Activated T-helper 2 cell treated with anti-CD3 and anti-CD28 coated beads, Interferon-gamma antibody, Interleukin-2, Interleukin-4, amounts not matched to agents 10 μg/mL and 5 μg/mL and 100 μg/mL, durations not matched to agents 14 hours and 24 hours and 36 hours (primary cell): ENCODE measurements at regions of chr4 and their contacts with region 1.

Region 1: GRCh38 chr4:107757864-107758476 is 37.9 kb upstream of the PAPSS1 start:
- DNase-seq: no peak
- H3K4me3 Mint-ChIP-seq: no peak overlapping the region
- H3K27ac Mint-ChIP-seq: no peak overlapping the region
- H3K4me1 Mint-ChIP-seq: peaks cover 3% of the 10 kb centered on the region
- H3K27me3 Mint-ChIP-seq: peaks cover 6% of the 10 kb centered on the region

Region 2: GRCh38 chr4:107793996-107794395 is 36.0 kb after region 1 on chr4:
- intact Hi-C with region 1: no loop called
- DNase-seq: no peak
- H3K4me3 Mint-ChIP-seq: no peak overlapping the region
- H3K27ac Mint-ChIP-seq: no peak overlapping the region
- H3K4me1 Mint-ChIP-seq: no peaks in the 10 kb centered on the region
- H3K27me3 Mint-ChIP-seq: peaks cover 5% of the 10 kb centered on the region

Region 3: GRCh38 chr4:107888237-107888636 is 130.3 kb after region 1 on chr4:
- intact Hi-C with region 1: no loop called
- DNase-seq: no peak
- H3K4me3 Mint-ChIP-seq: no peak overlapping the region
- H3K27ac Mint-ChIP-seq: no peak overlapping the region
- H3K4me1 Mint-ChIP-seq: no peaks in the 10 kb centered on the region
- H3K27me3 Mint-ChIP-seq: no peaks in the 10 kb centered on the region

Region 4: DNA sequence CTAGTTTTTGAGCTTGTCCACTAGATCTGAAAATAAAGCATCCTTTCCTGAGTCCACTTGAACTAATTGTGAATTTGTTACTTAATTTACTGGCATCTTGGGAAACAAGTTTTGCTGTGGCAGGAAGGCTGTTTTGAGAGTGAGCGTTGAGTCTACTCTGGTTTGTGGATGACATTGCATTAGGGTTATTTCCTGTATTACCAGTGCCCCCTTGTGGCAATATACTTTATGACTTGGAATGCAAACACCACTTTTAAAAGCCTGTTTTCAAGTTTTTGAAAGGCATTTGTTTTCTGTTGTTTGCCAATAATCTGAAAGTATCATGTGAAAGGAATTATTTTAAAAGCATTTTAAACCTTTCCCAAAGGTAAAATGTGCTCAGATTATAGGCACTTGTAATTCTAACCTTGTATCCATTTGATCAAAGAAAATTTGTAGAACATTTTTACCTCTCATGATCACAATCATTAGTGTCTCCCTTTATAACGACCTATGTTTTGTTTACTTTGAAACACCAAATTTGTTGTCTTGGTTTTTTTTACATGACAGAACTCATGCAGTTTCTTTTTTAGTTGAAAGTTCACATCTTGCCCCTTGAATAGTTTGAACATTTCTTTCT is 155.4 kb after region 1 on chr4:
- intact Hi-C with region 1: loop called (anchors 1 kb)
- DNase-seq: no peak
- H3K4me3 Mint-ChIP-seq: no peak overlapping the region
- H3K27ac Mint-ChIP-seq: no peak overlapping the region
- H3K4me1 Mint-ChIP-seq: peaks cover 4% of the 10 kb centered on the region
- H3K27me3 Mint-ChIP-seq: peaks cover 9% of the 10 kb centered on the region